CD8-positive, alpha-beta T cell (primary cell): ENCODE measurements at regions of chr11 and their contacts with region 1.

Region 1: GRCh38 chr11:124622531-124623451 is at the start of gene TBRG1:
- DNase-seq: peak; percentile 62 to 95 (median 84)
- ATAC-seq: peak; percentile 97
- H3K4me3 ChIP-seq: peak within 1 kb of the TSS; percentile 94 to 100
- H3K4me3 Mint-ChIP-seq: peak within 1 kb of the TSS; percentile 97
- H3K27ac ChIP-seq: peak within 1 kb of the TSS; percentile 95 to 97
- H3K27ac Mint-ChIP-seq: peak within 1 kb of the TSS; percentile 99
- H3K4me1 ChIP-seq: peaks cover 16% of the 10 kb centered on the region
- H3K4me1 Mint-ChIP-seq: peaks cover 43% of the 10 kb centered on the region
- H3K27me3 ChIP-seq: no peaks in the 10 kb centered on the region
- H3K27me3 Mint-ChIP-seq: peaks cover 6% of the 10 kb centered on the region
- CTCF ChIP-seq: no peak
- total RNA-seq, gene TBRG1: 59.2 to 61.0 TPM

Region 2: DNA sequence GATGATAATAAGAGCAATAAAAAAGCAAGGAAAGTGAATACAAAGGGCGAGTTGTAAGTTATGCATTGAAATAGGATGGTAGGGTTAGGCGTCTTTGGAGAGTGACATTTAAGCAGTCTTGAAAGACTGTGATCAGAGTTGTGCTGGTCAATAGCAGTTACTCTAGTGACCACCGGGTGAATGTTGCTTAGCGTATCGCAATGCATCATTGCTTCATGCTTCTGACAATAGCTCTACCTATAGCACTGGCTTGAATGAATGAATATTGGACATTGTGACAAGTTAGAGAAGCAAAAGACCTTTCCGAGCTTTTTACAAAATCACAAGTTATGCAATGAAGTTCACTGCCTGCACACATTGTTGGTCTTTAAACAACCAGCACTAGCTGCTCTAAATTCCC is 71.6 kb before region 1 on chr11:
- CTCF ChIA-PET with region 1: no interaction called
- POLR2A ChIA-PET with region 1: no interaction called
- intact Hi-C with region 1: no loop called
- DNase-seq: no peak
- ATAC-seq: no peak
- H3K4me3 ChIP-seq: no peak overlapping the region
- H3K4me3 Mint-ChIP-seq: no peak overlapping the region
- H3K27ac ChIP-seq: no peak overlapping the region
- H3K27ac Mint-ChIP-seq: no peak overlapping the region
- H3K4me1 ChIP-seq: no peaks in the 10 kb centered on the region
- H3K4me1 Mint-ChIP-seq: no peaks in the 10 kb centered on the region
- H3K27me3 ChIP-seq: no peaks in the 10 kb centered on the region
- H3K27me3 Mint-ChIP-seq: peaks cover 3% of the 10 kb centered on the region
- CTCF ChIP-seq: no peak

Region 3: GRCh38 chr11:124865921-124866583 is 243.3 kb after region 1 on chr11:
- CTCF ChIA-PET with region 1: interaction called, 7 read pairs
- POLR2A ChIA-PET with region 1: no interaction called
- intact Hi-C with region 1: loop called in 1 of 2 experiments (anchors 1 kb)
- DNase-seq: peak in 8 of 9 experiments; percentile 26 to 67 (median 54)
- ATAC-seq: peak; percentile 66
- H3K4me3 ChIP-seq: peak overlapping the region; percentile 8 to 33
- H3K4me3 Mint-ChIP-seq: peak overlapping the region; percentile 12
- H3K27ac ChIP-seq: no peak overlapping the region
- H3K27ac Mint-ChIP-seq: no peak overlapping the region
- H3K4me1 ChIP-seq: peaks cover 47% of the 10 kb centered on the region
- H3K4me1 Mint-ChIP-seq: peaks cover 43% of the 10 kb centered on the region
- H3K27me3 ChIP-seq: peaks cover 56 to 62% of the 10 kb centered on the region in 2 experiments
- H3K27me3 Mint-ChIP-seq: peaks cover 86% of the 10 kb centered on the region
- CTCF ChIP-seq: peak; percentile 72